AG04449 (cell line): ENCODE measurements at regions of chr17 and their contacts with region 1.

Region 1: GRCh38 chr17:19992803-19993713 is 15.4 kb upstream of the AKAP10 start:
- DNase-seq: peak; percentile 26
- H3K4me3 ChIP-seq: no peak overlapping the region
- CTCF ChIP-seq: peak; percentile 62

Region 2: GRCh38 chr17:19977311-19978208 is 15.5 kb before region 1 on chr17 and contains the start of gene AKAP10:
- CTCF ChIA-PET with region 1: interaction called, 31 read pairs
- POLR2A ChIA-PET with region 1: interaction called, 5 read pairs
- DNase-seq: peak; percentile 9
- H3K4me3 ChIP-seq: peak within 1 kb of the TSS; percentile 92
- CTCF ChIP-seq: no peak